PC-3 (cell line): ENCODE measurements at regions of chr18 and their contacts with region 1.

Region 1: DNA sequence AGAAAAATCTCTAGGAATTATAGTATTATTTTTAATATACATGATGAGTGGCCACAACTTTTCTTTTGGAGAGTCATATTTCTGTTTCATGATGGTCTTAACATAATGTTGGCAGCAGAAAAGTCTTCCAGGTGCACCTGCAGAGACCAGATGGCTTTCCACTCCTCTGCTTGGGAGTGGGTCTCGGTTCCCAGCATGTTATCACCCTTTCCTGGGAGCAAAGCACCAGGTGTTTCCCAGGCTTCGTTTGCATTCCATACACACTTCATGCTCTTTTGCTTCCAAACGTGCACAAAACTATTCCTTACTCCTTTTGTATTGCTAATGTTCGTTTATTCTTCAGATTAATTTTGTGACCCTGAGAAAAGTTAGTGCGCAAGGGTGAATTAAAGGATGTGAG is 305.2 kb downstream of the CDH2 start:
- DNase-seq: no peak
- ATAC-seq: no peak
- H3K4me3 ChIP-seq: no peak overlapping the region
- H3K27ac ChIP-seq: no peak overlapping the region
- H3K4me1 ChIP-seq: no peaks in the 10 kb centered on the region
- H3K27me3 ChIP-seq: no peaks in the 10 kb centered on the region
- CTCF ChIP-seq: no peak

Region 2: GRCh38 chr18:27825689-27826477 is 45.8 kb before region 1 on chr18:
- CTCF ChIA-PET with region 1: no interaction called
- POLR2A ChIA-PET with region 1: no interaction called
- intact Hi-C with region 1: loop called (anchors 1 kb)
- DNase-seq: peak; percentile 73
- ATAC-seq: peak; percentile 90
- H3K4me3 ChIP-seq: no peak overlapping the region
- H3K27ac ChIP-seq: peak overlapping the region; percentile 31
- H3K4me1 ChIP-seq: peaks cover 16% of the 10 kb centered on the region
- H3K27me3 ChIP-seq: no peaks in the 10 kb centered on the region
- CTCF ChIP-seq: no peak